ENCODE measurements at regions of chr6 and their contacts with region 1.

Region 1: GRCh38 chr6:38493931-38494547 is 145.7 kb downstream of the BTBD9 start:
- DNase-seq: peak; percentile 87
- H3K4me3 ChIP-seq: no peak overlapping the region
- H3K27ac ChIP-seq: no peak overlapping the region
- H3K4me1 ChIP-seq: no peaks in the 10 kb centered on the region
- H3K27me3 ChIP-seq: no peaks in the 10 kb centered on the region
- CTCF ChIP-seq: peak; percentile 56 to 59
- POLR2A ChIP-seq: no peak

Region 2: GRCh38 chr6:37698261-37699137 is 795.5 kb before region 1 on chr6:
- CTCF ChIA-PET with region 1: interaction called, 11 read pairs
- POLR2A ChIA-PET with region 1: no interaction called
- dilution Hi-C with region 1: no loop called
- intact Hi-C with region 1: loop called (anchors 1 kb)
- DNase-seq: peak; percentile 53
- H3K4me3 ChIP-seq: peak overlapping the region; percentile 55 to 85 (median 77)
- H3K27ac ChIP-seq: no peak overlapping the region
- H3K4me1 ChIP-seq: peaks cover 16% of the 10 kb centered on the region
- H3K27me3 ChIP-seq: peaks cover 33 to 50% of the 10 kb centered on the region in 2 experiments
- CTCF ChIP-seq: no peak
- POLR2A ChIP-seq: no peak

Region 3: DNA sequence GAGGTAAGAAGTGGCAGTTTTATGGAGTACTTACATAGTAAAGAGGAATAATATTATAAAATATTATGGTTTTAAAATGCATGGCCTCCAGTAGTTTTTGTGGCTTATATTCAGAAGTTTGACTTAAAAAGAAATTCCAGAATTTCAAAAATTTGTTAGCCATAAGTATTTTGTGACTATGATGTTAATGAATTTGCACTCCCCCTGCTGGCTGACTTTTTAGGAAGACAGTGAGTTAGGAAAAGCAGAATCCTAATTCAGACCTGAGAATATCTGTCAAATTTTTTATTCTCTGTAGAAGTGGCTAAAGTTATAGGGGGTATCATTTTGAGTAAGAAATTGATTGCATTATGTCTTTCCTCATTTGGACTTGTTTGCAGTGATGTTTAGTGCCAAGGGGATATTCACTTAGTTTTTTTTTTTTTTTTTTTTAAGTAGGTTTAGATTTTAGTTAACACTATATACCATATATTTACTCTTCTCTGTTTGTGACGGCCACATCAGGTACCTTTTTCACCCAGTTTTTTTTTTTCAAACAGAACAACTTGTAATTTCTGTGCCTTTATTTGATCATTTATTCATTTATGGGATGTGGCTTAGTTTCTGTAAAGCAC is 633.7 kb before region 1 on chr6:
- CTCF ChIA-PET with region 1: interaction called, 17 read pairs
- POLR2A ChIA-PET with region 1: no interaction called
- dilution Hi-C with region 1: no loop called
- intact Hi-C with region 1: no loop called
- DNase-seq: peak; percentile 50
- H3K4me3 ChIP-seq: no peak overlapping the region
- H3K27ac ChIP-seq: no peak overlapping the region
- H3K4me1 ChIP-seq: peaks cover 3% of the 10 kb centered on the region
- H3K27me3 ChIP-seq: no peaks in the 10 kb centered on the region
- CTCF ChIP-seq: peak; percentile 28 to 53
- POLR2A ChIP-seq: no peak

Region 4: DNA sequence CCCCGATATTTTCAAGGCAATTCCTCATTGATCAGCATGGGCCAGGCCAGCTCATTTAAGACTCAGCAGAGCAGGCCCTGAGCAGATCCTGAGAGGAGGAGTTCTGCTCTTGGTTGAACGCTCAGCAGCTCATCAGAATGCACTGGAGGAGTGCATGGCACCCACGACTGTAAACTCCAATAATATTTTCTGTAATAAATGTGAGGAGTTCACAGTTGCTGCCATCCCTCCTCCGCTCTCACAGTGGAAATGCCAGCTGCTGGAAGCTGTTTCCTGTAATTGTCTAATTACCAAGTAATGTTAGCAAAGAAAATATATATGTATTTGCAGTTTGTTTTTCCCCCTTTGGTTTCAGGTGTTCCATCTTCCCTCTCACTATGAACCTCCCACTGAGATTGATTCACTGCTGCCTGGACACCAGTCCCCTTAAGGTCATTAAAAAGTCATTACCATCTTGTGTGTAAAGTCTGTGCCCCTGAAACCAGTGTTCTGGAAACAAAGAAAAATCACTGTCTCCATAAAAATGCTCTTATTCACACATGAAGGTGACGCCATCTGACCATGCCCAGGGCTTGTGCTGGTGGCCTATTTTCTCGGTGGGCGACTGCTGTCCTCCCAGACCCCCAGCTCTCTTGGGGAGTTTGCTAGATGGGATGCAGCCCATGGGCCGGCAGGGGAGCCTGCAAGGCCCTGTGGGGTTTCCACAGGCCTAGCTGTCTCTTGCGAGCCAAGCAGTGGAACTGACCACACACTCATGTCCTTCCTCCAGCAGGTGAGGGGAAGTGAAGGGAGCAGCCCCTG is 300.4 kb before region 1 on chr6:
- CTCF ChIA-PET with region 1: interaction called, 11 read pairs
- POLR2A ChIA-PET with region 1: no interaction called
- dilution Hi-C with region 1: no loop called
- intact Hi-C with region 1: no loop called
- DNase-seq: peak; percentile 71
- H3K4me3 ChIP-seq: no peak overlapping the region
- H3K27ac ChIP-seq: peak overlapping the region; percentile 28
- H3K4me1 ChIP-seq: peaks cover 13% of the 10 kb centered on the region
- H3K27me3 ChIP-seq: no peaks in the 10 kb centered on the region
- CTCF ChIP-seq: no peak
- POLR2A ChIP-seq: no peak

Region 5: GRCh38 chr6:38483526-38483925 is 10.5 kb before region 1 on chr6:
- CTCF ChIA-PET with region 1: interaction called, 33 read pairs
- POLR2A ChIA-PET with region 1: no interaction called
- dilution Hi-C with region 1: no loop called
- intact Hi-C with region 1: no loop called
- DNase-seq: no peak
- H3K4me3 ChIP-seq: no peak overlapping the region
- H3K27ac ChIP-seq: no peak overlapping the region
- H3K4me1 ChIP-seq: no peaks in the 10 kb centered on the region
- H3K27me3 ChIP-seq: no peaks in the 10 kb centered on the region
- CTCF ChIP-seq: no peak
- POLR2A ChIP-seq: no peak

Region 6: GRCh38 chr6:38570750-38571149 is 76.7 kb after region 1 on chr6:
- CTCF ChIA-PET with region 1: interaction called, 88 read pairs
- POLR2A ChIA-PET with region 1: no interaction called
- dilution Hi-C with region 1: no loop called
- intact Hi-C with region 1: loop called (anchors 2 kb)
- DNase-seq: peak; percentile 58
- H3K4me3 ChIP-seq: no peak overlapping the region
- H3K27ac ChIP-seq: no peak overlapping the region
- H3K4me1 ChIP-seq: peaks cover 36% of the 10 kb centered on the region
- H3K27me3 ChIP-seq: no peaks in the 10 kb centered on the region
- CTCF ChIP-seq: peak; percentile 10 to 14
- POLR2A ChIP-seq: no peak

Region 7: DNA sequence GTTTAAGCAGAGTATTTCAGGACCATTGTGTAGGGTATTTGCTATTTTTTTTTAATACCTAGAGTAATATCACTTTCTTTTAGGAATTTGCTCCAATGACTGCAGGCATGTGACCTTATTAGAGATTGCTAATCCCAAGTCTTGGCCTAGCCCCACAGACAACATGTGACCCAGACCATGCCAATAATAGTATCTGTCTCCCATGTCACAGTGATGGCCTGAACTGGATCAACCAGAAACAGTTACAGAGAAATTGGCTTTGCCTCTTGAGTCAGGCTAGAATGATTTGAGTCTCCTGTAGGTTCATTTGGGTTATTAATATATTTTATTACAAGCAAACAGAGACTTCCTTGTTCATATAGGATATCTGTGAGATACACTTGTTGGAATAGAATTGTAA is 337.8 kb after region 1 on chr6:
- CTCF ChIA-PET with region 1: no interaction called
- POLR2A ChIA-PET with region 1: no interaction called
- dilution Hi-C with region 1: no loop called
- intact Hi-C with region 1: no loop called
- DNase-seq: no peak
- H3K4me3 ChIP-seq: no peak overlapping the region
- H3K27ac ChIP-seq: no peak overlapping the region
- H3K4me1 ChIP-seq: no peaks in the 10 kb centered on the region
- H3K27me3 ChIP-seq: no peaks in the 10 kb centered on the region
- CTCF ChIP-seq: no peak
- POLR2A ChIP-seq: no peak

Measured in endothelial cell of umbilical vein (primary cell).